Panc1 (cell line): ENCODE measurements at regions of chr3 and their contacts with region 1.

Region 1: GRCh38 chr3:134600685-134601463 is 49.9 kb downstream of the KY start:
- DNase-seq: peak; percentile 8
- ATAC-seq: peak; percentile 86
- H3K4me3 ChIP-seq: no peak overlapping the region
- H3K27ac ChIP-seq: no peak overlapping the region
- H3K4me1 ChIP-seq: peaks cover 5% of the 10 kb centered on the region; the same call in 1 of the 2 replicates
- H3K27me3 ChIP-seq: peaks cover 12% of the 10 kb centered on the region
- CTCF ChIP-seq: peak; percentile 100

Region 2: DNA sequence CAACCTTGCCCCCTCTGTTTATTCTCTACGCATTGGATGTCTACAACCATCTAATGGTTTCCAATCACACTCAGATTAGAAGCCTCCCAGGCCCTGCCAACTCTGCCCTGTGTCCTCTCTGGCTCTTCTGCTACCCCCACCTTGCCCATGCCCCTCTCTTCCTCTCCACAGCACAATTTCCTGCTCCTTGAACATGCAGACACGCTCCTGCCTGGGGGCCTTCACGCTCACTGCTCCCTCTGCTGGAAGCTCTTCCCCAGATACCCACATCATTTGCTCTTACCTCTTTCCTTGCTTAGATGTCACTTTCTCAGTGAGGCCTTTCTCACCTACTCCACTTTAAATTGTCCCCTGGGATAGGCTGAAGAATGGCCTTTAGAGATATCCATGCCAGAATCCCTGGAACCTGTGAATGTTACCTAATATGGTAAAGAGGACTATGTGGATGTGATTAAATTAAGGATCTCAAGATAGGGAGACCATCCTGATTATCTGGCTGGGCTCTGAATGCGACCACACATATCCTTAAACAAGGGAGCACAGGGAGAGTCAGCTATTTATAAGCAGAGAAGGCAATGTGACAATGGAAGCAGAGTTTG is 40.1 kb after region 1 on chr3:
- CTCF ChIA-PET with region 1: interaction called, 3 read pairs
- POLR2A ChIA-PET with region 1: no interaction called
- in situ Hi-C with region 1: no loop called
- intact Hi-C with region 1: loop called (anchors 2 kb)
- DNase-seq: no peak
- ATAC-seq: peak; percentile 76; the same call in 1 of the 2 replicates
- H3K4me3 ChIP-seq: no peak overlapping the region
- H3K27ac ChIP-seq: no peak overlapping the region
- H3K4me1 ChIP-seq: no peaks in the 10 kb centered on the region
- H3K27me3 ChIP-seq: peaks cover 2% of the 10 kb centered on the region; the same call in 1 of the 2 replicates
- CTCF ChIP-seq: peak; percentile 74

Region 3: GRCh38 chr3:134754768-134755559 is 154.1 kb after region 1 on chr3:
- CTCF ChIA-PET with region 1: interaction called, 9 read pairs
- POLR2A ChIA-PET with region 1: no interaction called
- in situ Hi-C with region 1: no loop called
- intact Hi-C with region 1: loop called (anchors 5 kb)
- DNase-seq: peak; percentile 13
- ATAC-seq: peak; percentile 88
- H3K4me3 ChIP-seq: no peak overlapping the region
- H3K27ac ChIP-seq: no peak overlapping the region
- H3K4me1 ChIP-seq: no peaks in the 10 kb centered on the region
- H3K27me3 ChIP-seq: peaks cover 18% of the 10 kb centered on the region
- CTCF ChIP-seq: peak; percentile 89

Region 4: DNA sequence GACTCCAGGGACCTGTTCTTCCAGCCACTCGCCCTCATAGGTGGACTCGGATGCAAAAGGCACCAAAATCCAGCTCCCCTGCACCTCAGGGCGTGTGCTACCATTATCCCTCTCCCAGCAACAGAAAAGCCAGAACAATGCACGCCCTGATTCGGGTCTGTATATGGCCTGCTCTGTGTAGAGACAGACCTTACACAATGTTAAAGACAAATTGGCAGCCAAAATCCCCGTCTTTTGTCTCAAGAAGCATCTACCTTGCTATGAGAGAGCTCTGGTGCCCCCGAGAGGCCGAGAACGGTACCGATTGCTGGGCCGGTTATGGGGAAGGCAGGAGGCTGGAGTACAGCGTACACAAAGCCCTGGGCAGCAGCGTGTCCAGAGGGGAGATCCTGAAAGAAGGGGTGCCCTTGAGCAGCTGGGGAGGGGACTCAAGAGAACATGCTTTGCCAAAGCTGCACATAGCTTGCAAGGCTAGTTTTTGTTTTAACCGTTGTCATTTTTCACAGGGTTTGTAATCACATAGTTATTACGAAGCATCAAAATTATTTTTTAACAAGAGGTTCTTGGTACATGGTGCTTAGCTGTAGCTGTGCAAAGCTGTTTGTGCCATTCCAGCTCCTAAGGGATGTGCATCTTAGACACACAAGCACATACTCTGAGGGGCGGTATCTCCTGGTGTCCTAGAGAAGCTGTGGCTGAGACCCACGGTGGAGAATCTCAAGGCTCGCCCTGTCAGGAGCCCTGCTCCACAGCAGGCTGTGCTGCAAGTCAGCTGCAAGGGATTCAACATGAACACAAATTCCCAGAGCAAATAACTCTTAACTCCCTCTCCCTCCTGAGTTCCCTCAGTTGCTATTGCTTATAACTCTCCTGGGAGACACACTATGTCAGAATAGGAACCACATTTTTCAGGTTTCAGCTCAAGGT is 903.1 kb after region 1 on chr3:
- CTCF ChIA-PET with region 1: no interaction called
- POLR2A ChIA-PET with region 1: no interaction called
- in situ Hi-C with region 1: no loop called
- intact Hi-C with region 1: loop called (anchors 10 kb)
- DNase-seq: peak; percentile 25
- ATAC-seq: peak; percentile 97
- H3K4me3 ChIP-seq: no peak overlapping the region
- H3K27ac ChIP-seq: no peak overlapping the region
- H3K4me1 ChIP-seq: no peaks in the 10 kb centered on the region
- H3K27me3 ChIP-seq: peaks cover 11% of the 10 kb centered on the region
- CTCF ChIP-seq: peak; percentile 86

Region 5: DNA sequence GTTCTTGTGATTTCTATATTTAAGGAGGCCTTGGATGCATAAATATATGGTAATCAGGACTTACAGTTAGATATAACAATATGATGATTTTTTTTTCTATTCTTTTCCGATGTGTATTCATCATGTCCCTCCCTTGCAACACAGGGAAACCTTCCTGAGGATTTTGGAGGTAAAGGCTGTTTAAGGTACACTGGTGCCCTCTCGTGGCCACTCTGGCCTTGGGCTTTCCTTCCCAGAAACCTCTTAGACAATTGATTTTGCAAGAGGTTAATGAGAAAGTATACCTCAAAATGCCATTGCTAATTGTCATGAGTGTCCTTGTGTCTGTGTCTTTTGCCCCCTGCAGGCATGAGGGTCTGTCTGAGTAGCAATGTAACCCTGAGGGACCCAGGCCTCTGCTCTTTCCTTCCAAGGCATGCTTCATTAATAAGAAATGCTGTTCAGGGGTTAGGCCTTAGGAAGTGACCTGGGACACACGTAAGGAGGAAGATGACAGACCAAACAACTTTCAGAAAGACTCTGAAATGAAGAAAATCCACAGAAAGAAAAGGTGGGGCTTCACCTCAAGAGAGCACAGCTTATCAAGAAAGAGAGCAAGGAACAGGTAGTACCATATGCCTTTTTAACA is 1294.3 kb after region 1 on chr3:
- CTCF ChIA-PET with region 1: no interaction called
- POLR2A ChIA-PET with region 1: no interaction called
- in situ Hi-C with region 1: no loop called
- intact Hi-C with region 1: loop called (anchors 5 kb)
- DNase-seq: peak; percentile 69
- ATAC-seq: peak; percentile 87
- H3K4me3 ChIP-seq: no peak overlapping the region
- H3K27ac ChIP-seq: no peak overlapping the region
- H3K4me1 ChIP-seq: no peaks in the 10 kb centered on the region
- H3K27me3 ChIP-seq: no peaks in the 10 kb centered on the region; the same call in 1 of the 2 replicates
- CTCF ChIP-seq: peak; percentile 94